ENCODE measurements at regions of chr19 and their contacts with region 1.

Region 1: GRCh38 chr19:43519436-43520088 is 7.4 kb downstream of the ETHE1 start:
- DNase-seq: peak; percentile 86
- H3K4me3 Mint-ChIP-seq: no peak overlapping the region
- H3K27ac Mint-ChIP-seq: peak overlapping the region; percentile 73
- H3K4me1 Mint-ChIP-seq: peaks cover 23% of the 10 kb centered on the region
- H3K27me3 Mint-ChIP-seq: no peaks in the 10 kb centered on the region

Region 2: GRCh38 chr19:43430142-43430710 is 89.3 kb before region 1 on chr19:
- CTCF ChIA-PET with region 1: interaction called, 10 read pairs
- POLR2A ChIA-PET with region 1: no interaction called
- DNase-seq: peak; percentile 50
- H3K4me3 Mint-ChIP-seq: no peak overlapping the region
- H3K27ac Mint-ChIP-seq: peak overlapping the region; percentile 88
- H3K4me1 Mint-ChIP-seq: peaks cover 46% of the 10 kb centered on the region
- H3K27me3 Mint-ChIP-seq: no peaks in the 10 kb centered on the region

Region 3: DNA sequence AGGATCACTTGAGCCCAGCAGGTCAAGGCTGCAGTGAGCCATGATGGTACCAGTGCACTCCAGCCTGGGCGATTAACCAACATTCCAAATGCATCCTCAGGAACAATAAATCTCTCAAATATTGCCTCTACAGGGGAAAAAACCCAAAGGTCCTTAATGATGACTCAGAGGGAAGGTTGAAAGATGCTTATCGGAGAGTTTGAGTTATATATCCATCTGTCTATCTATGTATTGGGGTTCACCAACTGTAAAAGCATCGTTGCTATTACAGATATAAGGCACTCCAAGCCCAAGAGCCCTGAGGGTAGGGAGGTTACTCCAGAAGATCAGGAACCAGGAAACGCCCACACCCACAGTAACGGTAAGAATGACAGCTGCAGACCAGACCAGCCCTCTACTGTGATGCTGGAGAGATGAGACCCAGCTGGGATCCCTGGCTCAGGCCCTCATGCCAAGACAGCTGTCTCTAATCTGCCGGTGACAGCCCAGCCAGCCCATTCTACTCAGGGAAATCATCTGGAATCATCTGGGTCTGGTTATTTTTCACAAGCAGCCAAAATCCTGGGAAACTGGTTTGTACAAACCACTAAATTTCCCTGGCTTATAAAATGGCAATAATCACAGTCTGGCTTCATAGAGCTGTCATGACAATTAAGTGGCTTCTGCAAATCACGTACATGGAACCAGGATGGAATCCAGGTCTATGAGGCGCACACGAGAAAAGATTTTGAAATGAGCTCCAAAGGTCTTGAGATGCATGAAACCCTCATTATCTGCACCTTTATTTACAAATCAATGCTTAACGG is 81.1 kb before region 1 on chr19:
- CTCF ChIA-PET with region 1: interaction called, 10 read pairs
- POLR2A ChIA-PET with region 1: interaction called, 10 read pairs
- DNase-seq: peak; percentile 27
- H3K4me3 Mint-ChIP-seq: peak overlapping the region; percentile 32
- H3K27ac Mint-ChIP-seq: peak overlapping the region; percentile 97
- H3K4me1 Mint-ChIP-seq: peaks cover 52% of the 10 kb centered on the region
- H3K27me3 Mint-ChIP-seq: peaks cover 3% of the 10 kb centered on the region

Region 4: DNA sequence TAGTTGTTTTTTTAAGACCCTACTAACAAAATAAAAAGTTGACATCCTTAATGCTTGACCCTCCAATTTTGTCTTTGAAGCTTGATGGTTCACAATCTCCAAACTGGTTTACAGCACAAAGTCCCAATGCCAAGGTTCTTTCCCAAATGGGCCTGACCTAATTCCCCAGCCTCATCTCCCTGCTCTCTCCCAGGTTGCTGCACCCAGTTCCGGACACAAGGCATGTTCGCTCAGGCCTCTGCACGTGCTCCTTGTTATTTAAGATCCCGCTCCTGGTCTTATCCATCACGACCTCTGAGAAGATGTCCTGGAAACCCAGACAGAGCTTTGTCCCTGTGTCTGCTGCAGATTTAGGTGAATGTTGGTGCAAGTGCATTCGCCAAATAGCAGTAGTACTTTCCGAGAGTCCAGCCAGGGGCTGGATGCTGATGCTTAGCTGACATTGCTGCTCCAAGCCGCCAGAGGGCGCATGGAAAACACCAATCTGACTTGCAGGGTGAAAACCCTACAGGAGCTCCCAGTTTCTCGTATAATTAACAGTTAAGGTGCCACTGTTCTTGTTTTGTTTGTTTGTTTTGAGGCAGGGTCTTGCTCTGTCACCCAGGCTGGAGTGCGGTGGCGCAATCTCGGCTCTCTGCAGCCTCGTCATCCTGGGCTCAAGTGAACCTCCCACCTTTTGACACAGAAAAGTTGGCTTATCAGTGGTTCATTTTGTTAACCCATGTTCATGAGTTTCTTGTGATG is 72.6 kb before region 1 on chr19:
- CTCF ChIA-PET with region 1: interaction called, 41 read pairs
- POLR2A ChIA-PET with region 1: interaction called, 3 read pairs
- DNase-seq: peak; percentile 85
- H3K4me3 Mint-ChIP-seq: no peak overlapping the region
- H3K27ac Mint-ChIP-seq: no peak overlapping the region
- H3K4me1 Mint-ChIP-seq: peaks cover 39% of the 10 kb centered on the region
- H3K27me3 Mint-ChIP-seq: no peaks in the 10 kb centered on the region

Region 5: GRCh38 chr19:43463381-43464136 is 56.0 kb before region 1 on chr19:
- CTCF ChIA-PET with region 1: interaction called, 13 read pairs
- POLR2A ChIA-PET with region 1: no interaction called
- DNase-seq: peak; percentile 99
- H3K4me3 Mint-ChIP-seq: peak overlapping the region; percentile 90
- H3K27ac Mint-ChIP-seq: peak overlapping the region; percentile 98
- H3K4me1 Mint-ChIP-seq: peaks cover 39% of the 10 kb centered on the region
- H3K27me3 Mint-ChIP-seq: no peaks in the 10 kb centered on the region

Region 6: DNA sequence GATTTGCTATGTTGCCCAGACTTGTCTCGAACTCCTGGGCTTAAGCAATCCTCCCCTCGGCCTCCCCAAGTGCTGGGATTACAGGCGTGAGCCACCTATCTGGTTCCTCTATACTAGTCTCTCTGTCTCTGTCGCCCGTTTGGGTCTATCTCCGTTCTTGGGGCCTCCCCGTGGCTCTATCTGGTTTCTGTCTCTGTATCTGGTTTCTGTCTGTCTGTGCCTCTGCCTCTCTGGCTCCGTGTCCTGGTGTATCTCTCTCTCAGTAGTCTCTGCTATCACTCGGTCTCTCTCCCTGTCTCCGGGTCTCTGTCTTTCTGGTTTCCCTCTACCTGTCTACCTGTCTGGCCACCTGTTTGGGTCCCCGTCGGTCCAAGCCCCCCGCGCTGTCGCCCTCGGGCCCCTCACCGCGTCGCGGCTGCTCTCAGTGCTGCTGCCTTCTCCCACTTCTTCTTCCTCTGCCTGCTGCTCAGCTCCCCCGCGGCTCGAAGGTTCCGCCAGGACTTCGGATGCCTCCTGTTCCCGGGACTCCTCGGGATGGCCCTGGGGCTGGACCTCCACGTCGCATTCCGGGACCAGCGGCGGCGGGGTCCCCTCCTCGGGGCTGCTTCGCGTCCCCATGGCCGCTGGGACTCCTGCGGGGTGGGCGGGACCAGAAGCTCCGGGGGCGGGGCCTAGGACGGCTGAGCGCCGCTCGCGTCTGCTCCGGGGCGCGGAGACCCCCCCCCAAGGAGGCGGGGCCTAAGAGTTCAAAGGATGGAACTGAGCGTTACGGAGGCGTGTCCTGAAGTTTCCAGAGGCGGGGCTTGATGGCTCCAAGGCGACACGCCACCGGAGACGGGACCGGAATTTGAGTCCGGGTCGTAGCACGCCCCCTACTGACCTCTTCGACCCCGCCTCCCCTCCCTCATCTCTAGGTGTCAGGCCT is 15.8 kb before region 1 on chr19:
- CTCF ChIA-PET with region 1: interaction called, 28 read pairs
- POLR2A ChIA-PET with region 1: interaction called, 3 read pairs
- DNase-seq: peak; percentile 99
- H3K4me3 Mint-ChIP-seq: peak overlapping the region; percentile 83
- H3K27ac Mint-ChIP-seq: peak overlapping the region; percentile 89
- H3K4me1 Mint-ChIP-seq: peaks cover 33% of the 10 kb centered on the region
- H3K27me3 Mint-ChIP-seq: no peaks in the 10 kb centered on the region